Caco-2 (cell line): ENCODE measurements at regions of chr1 and their contacts with region 1.

Region 1: GRCh38 chr1:20100632-20101355 is 18.5 kb downstream of the PLA2G2D start:
- DNase-seq: peak; percentile 32 to 35
- H3K4me3 ChIP-seq: no peak overlapping the region
- H3K4me3 Mint-ChIP-seq: no peak overlapping the region
- H3K27ac Mint-ChIP-seq: no peak overlapping the region
- H3K4me1 ChIP-seq: no peaks in the 10 kb centered on the region
- H3K4me1 Mint-ChIP-seq: no peaks in the 10 kb centered on the region
- H3K27me3 ChIP-seq: no peaks in the 10 kb centered on the region
- H3K27me3 Mint-ChIP-seq: no peaks in the 10 kb centered on the region
- CTCF ChIP-seq: peak; percentile 40 to 54

Region 2: GRCh38 chr1:20151906-20152598 is 51.3 kb after region 1 on chr1:
- CTCF ChIA-PET with region 1: interaction called, 5 read pairs
- POLR2A ChIA-PET with region 1: no interaction called
- intact Hi-C with region 1: loop called (anchors 1 kb)
- DNase-seq: peak; percentile 81 to 85
- H3K4me3 ChIP-seq: 0 out of 2 replicates have a peak overlapping the region, but pooled peaks have one; percentile 10
- H3K4me3 Mint-ChIP-seq: peak overlapping the region; percentile 47
- H3K27ac Mint-ChIP-seq: peak overlapping the region; percentile 35
- H3K4me1 ChIP-seq: no peaks in the 10 kb centered on the region
- H3K4me1 Mint-ChIP-seq: no peaks in the 10 kb centered on the region
- H3K27me3 ChIP-seq: no peaks in the 10 kb centered on the region
- H3K27me3 Mint-ChIP-seq: no peaks in the 10 kb centered on the region
- CTCF ChIP-seq: peak; percentile 80 to 92

Region 3: DNA sequence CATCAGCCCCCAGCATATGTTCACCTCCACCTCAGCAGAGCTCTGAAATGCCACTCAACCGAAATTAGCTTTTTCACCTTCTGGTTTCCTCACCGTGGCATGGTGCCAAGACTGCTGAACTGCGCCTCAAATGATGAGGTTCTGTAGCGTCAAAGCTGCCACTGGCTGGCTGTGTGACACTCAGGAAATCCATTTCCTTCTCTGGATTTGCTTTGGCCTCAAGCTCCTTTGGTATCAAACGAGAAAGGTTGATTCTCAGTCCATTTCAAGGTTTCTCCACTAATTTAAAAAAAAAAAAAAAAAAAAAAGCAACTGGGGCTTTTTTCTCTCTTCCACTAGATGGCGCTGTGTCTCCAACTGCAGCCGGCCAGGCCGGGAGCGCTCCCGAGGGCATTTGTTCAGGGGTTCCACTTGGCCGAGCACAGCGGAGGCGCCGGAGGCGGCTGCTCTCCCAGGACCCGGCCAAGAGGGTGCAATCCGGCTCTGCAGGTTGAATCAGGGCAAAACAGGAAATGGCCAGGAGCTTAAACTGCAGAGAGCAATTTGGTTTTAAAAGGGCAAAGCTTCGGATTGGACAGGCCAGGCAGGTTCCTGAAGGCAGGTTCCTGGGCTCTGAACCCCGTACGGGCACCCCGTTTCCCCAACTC is 112.0 kb after region 1 on chr1:
- CTCF ChIA-PET with region 1: no interaction called
- POLR2A ChIA-PET with region 1: no interaction called
- intact Hi-C with region 1: no loop called
- DNase-seq: peak; percentile 70 to 73
- H3K4me3 ChIP-seq: no peak overlapping the region
- H3K4me3 Mint-ChIP-seq: no peak overlapping the region
- H3K27ac Mint-ChIP-seq: no peak overlapping the region
- H3K4me1 ChIP-seq: no peaks in the 10 kb centered on the region
- H3K4me1 Mint-ChIP-seq: no peaks in the 10 kb centered on the region
- H3K27me3 ChIP-seq: no peaks in the 10 kb centered on the region; the same call in 1 of the 2 replicates
- H3K27me3 Mint-ChIP-seq: peaks cover 13% of the 10 kb centered on the region
- CTCF ChIP-seq: peak; percentile 52 to 74